Activated CD4-positive, alpha-beta T cell treated with anti-CD3 and anti-CD28 coated beads for 36 hours (primary cell): ENCODE measurements at regions of chr9 and their contacts with region 1.

Region 1: GRCh38 chr9:71716138-71716909 is 52.0 kb downstream of the CEMIP2 start:
- DNase-seq: no peak
- ATAC-seq: no peak
- H3K4me3 Mint-ChIP-seq: no peak overlapping the region
- H3K27ac Mint-ChIP-seq: no peak overlapping the region
- H3K4me1 Mint-ChIP-seq: peaks cover 3% of the 10 kb centered on the region
- H3K27me3 Mint-ChIP-seq: no peaks in the 10 kb centered on the region

Region 2: DNA sequence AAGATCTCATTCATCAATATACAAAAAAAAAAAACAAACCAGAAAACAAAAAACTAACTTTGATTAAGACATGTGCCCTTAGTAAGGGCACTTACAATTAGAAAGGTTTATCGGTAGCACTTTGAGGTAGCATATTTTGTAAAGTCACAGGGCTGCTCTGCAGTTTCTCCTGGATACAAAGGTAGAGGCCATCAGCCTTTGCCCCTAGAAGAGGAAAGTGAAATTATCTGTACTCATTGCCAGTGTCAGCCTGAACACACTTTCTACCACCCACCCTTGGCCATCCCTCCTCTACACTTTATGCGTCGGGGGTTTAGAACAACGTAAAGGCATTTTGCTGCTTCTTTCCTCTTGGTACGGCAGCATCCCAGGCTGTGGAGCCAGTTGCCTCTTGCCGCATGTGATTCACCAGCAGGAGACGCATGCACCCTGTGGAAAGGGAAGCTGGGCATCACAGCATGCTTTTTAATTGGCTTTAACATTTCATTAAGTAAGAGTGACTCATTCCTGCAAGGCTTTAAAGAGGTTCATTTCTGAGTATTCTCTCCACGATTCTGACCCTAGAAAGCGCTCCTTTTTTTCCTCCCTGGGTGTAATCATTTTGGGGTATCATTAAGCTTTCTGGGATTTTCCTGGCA is 32.6 kb before region 1 on chr9:
- CTCF ChIA-PET with region 1: interaction called, 15 read pairs
- POLR2A ChIA-PET with region 1: no interaction called
- intact Hi-C with region 1: no loop called
- DNase-seq: no peak
- ATAC-seq: no peak
- H3K4me3 Mint-ChIP-seq: no peak overlapping the region
- H3K27ac Mint-ChIP-seq: peak overlapping the region; percentile 3
- H3K4me1 Mint-ChIP-seq: peaks cover 39% of the 10 kb centered on the region
- H3K27me3 Mint-ChIP-seq: no peaks in the 10 kb centered on the region

Region 3: GRCh38 chr9:71891557-71892189 is 175.3 kb after region 1 on chr9:
- CTCF ChIA-PET with region 1: no interaction called
- POLR2A ChIA-PET with region 1: no interaction called
- intact Hi-C with region 1: no loop called
- DNase-seq: no peak
- ATAC-seq: no peak
- H3K4me3 Mint-ChIP-seq: no peak overlapping the region
- H3K27ac Mint-ChIP-seq: no peak overlapping the region
- H3K4me1 Mint-ChIP-seq: peaks cover 49% of the 10 kb centered on the region
- H3K27me3 Mint-ChIP-seq: no peaks in the 10 kb centered on the region